HepG2 (cell line): ENCODE measurements at regions of chr9 and their contacts with region 1.

Region 1: GRCh38 chr9:20670395-20670794 is 13.7 kb upstream of the FOCAD start:
- DNase-seq: no peak
- ATAC-seq: no peak
- H3K4me3 ChIP-seq: no peak overlapping the region
- H3K27ac ChIP-seq: no peak overlapping the region
- H3K4me1 ChIP-seq: no peaks in the 10 kb centered on the region
- H3K27me3 ChIP-seq: no peaks in the 10 kb centered on the region
- CTCF ChIP-seq: no peak
- EP300 ChIP-seq: no peak
- POLR2A ChIP-seq: no peak
- RAD21 ChIP-seq: no peak

Region 2: DNA sequence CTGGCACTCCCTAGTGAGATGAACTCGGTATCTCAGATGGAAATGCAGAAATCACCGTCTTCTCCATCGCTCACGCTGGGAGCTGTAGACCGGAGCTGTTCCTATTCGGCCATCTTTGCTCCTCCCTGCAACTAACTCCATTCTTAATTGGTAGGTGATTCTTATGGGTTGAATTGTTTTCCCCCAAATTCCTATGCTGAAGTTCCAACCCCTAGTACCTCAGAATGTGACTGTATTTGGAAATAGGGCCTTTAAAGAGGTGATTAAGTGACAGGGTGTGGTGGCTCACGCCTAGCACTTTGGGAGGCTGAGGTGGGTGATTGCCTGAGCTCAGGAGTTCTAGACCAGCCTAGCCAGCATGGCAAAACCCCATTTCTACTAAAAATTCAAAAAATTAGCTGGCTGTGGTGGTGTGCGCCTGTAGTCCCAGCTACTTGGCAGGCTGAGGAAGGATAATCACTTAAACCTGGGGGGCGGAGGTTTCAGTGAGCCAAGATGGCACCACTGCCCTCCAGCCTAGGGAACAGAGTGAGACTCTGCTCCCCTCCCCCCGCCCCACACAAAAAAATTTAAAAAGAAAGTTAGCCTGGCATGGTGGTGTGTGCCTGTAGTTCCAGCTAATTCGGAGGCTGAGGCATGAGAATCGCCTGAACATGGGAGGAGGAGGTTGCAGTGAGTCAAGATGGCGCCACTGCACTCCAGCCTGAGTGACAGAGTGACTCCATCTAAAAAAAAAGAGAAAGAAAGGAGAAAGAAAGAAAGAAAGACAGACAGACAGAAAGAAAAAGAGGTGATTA is 11.5 kb before region 1 on chr9:
- CTCF ChIA-PET with region 1: no interaction called
- POLR2A ChIA-PET with region 1: no interaction called
- in situ Hi-C with region 1: no loop called
- intact Hi-C with region 1: no loop called
- DNase-seq: no peak
- ATAC-seq: no peak
- H3K4me3 ChIP-seq: no peak overlapping the region
- H3K27ac ChIP-seq: no peak overlapping the region
- H3K4me1 ChIP-seq: no peaks in the 10 kb centered on the region
- H3K27me3 ChIP-seq: no peaks in the 10 kb centered on the region
- CTCF ChIP-seq: no peak
- EP300 ChIP-seq: no peak
- POLR2A ChIP-seq: no peak
- RAD21 ChIP-seq: no peak

Region 3: DNA sequence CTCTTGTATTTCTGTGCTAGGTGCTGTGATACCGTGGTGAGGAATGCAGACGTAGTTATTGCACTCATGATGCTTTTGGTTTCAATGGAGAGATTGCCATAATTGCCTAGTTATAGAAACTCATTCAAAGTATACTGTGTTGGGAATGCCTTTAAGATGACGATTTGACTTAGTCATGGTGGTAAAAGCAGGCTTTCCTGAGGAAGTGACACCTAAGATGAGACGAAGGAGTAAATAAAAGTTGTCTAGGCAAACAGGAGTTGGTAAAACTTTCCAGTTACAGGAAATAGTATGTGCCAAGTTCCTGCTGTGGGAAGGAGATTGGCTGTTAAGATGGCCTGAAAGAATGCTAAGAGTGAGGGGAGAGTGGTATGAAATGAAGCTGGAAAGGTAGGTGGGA is 61.7 kb after region 1 on chr9:
- CTCF ChIA-PET with region 1: no interaction called
- POLR2A ChIA-PET with region 1: no interaction called
- in situ Hi-C with region 1: no loop called
- intact Hi-C with region 1: loop called (anchors 10 kb)
- DNase-seq: no peak
- ATAC-seq: no peak
- H3K4me3 ChIP-seq: no peak overlapping the region
- H3K27ac ChIP-seq: no peak overlapping the region
- H3K4me1 ChIP-seq: no peaks in the 10 kb centered on the region
- H3K27me3 ChIP-seq: no peaks in the 10 kb centered on the region
- CTCF ChIP-seq: no peak
- EP300 ChIP-seq: no peak
- POLR2A ChIP-seq: no peak
- RAD21 ChIP-seq: no peak

Region 4: DNA sequence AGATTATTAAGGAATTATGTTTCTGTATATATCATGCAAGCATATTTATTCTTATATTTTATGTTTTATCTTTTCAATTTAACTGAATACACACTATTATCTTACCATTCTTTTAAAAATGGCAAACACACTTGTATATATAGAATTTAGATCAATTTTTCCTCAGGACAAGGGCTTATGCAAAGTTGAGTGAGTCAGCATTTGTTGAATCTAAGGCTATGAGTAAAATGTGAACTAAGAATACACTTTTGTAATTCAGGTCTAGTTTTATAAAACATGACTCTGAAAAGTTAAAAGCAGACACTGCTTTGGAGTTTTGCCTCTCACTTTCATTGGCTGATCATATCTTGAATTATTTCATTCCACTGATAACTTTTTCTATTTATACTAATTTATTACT is 141.5 kb after region 1 on chr9:
- CTCF ChIA-PET with region 1: no interaction called
- POLR2A ChIA-PET with region 1: no interaction called
- in situ Hi-C with region 1: no loop called
- intact Hi-C with region 1: no loop called
- DNase-seq: no peak
- ATAC-seq: no peak
- H3K4me3 ChIP-seq: no peak overlapping the region
- H3K27ac ChIP-seq: no peak overlapping the region
- H3K4me1 ChIP-seq: no peaks in the 10 kb centered on the region
- H3K27me3 ChIP-seq: no peaks in the 10 kb centered on the region
- CTCF ChIP-seq: no peak
- EP300 ChIP-seq: no peak
- POLR2A ChIP-seq: no peak
- RAD21 ChIP-seq: no peak

Region 5: GRCh38 chr9:20884985-20885593 is 214.7 kb after region 1 on chr9:
- CTCF ChIA-PET with region 1: no interaction called
- POLR2A ChIA-PET with region 1: no interaction called
- in situ Hi-C with region 1: no loop called
- intact Hi-C with region 1: loop called (anchors 10 kb)
- DNase-seq: peak; percentile 44
- ATAC-seq: peak; percentile 69
- H3K4me3 ChIP-seq: no peak overlapping the region
- H3K27ac ChIP-seq: no peak overlapping the region
- H3K4me1 ChIP-seq: no peaks in the 10 kb centered on the region
- H3K27me3 ChIP-seq: no peaks in the 10 kb centered on the region
- CTCF ChIP-seq: peak; percentile 48
- EP300 ChIP-seq: no peak
- POLR2A ChIP-seq: no peak
- RAD21 ChIP-seq: no peak